ENCODE measurements at regions of chr4 and their contacts with region 1.

Region 1: GRCh38 chr4:183080372-183081115 is 18.5 kb upstream of the WWC2 start:
- ATAC-seq: no peak
- H3K4me3 ChIP-seq: no peak overlapping the region
- H3K27ac ChIP-seq: no peak overlapping the region
- H3K4me1 ChIP-seq: no peaks in the 10 kb centered on the region

Region 2: DNA sequence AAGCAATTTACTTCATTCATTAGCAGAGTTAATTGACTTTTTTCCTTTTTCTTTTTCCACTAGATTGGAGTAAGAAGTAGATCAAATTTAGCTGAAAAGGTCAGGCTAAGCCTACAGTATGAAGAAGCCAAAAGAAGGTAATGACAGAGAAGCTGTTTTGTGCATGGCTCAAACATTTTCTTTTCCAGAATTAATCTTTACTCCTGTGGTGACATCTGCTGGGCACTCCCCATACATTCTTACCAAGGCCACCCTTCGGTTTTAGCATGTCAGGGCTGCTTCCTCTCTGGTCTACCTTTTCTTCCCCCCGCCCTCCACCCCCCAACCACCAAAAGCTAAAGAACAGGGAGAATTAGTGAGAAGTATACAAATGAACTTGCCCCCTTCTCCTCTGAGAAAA is 169.3 kb after region 1 on chr4:
- in situ Hi-C with region 1: loop called in 6 of 9 experiments (anchors 5 to 25 kb)
- ATAC-seq: peak in 5 of 8 experiments; percentile 36 to 83 (median 67)
- H3K4me3 ChIP-seq: no peak overlapping the region
- H3K27ac ChIP-seq: no peak overlapping the region
- H3K4me1 ChIP-seq: no peaks in the 10 kb centered on the region

Region 3: DNA sequence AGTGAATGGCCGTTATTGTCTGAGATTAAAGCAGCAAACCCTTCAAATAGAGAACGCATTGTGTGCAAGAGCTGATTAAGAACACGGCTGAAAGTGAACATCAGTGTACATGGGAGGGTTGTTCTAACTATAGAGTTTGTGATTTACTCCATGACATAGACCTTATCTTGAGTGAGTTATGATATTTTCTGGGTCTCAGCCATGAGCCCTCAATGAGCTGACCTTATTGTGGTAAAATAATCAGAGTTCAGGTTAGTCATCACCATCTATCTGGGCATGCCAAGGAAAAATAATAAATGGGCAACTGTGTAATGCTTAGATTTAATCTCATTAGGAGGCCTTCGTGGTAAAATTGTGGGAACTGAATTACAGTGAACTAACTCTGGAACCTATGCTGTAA is 274.9 kb after region 1 on chr4:
- in situ Hi-C with region 1: no loop called
- ATAC-seq: peak in 5 of 8 experiments; percentile 88 to 93 (median 90)
- H3K4me3 ChIP-seq: no peak overlapping the region
- H3K27ac ChIP-seq: no peak overlapping the region
- H3K4me1 ChIP-seq: peaks cover 2 to 25% of the 10 kb centered on the region in 2 donors

Region 4: GRCh38 chr4:183411231-183411861 is 330.8 kb after region 1 on chr4:
- in situ Hi-C with region 1: no loop called
- ATAC-seq: no peak
- H3K4me3 ChIP-seq: no peak overlapping the region
- H3K27ac ChIP-seq: no peak overlapping the region
- H3K4me1 ChIP-seq: peaks cover 13 to 29% of the 10 kb centered on the region in 2 donors